ENCODE measurements at regions of chr15 and their contacts with region 1.

Region 1: GRCh38 chr15:44366971-44367370 is 60.5 kb upstream of the CTDSPL2 start:
- DNase-seq: no peak
- ATAC-seq: no peak
- H3K4me3 ChIP-seq: no peak overlapping the region
- H3K4me3 Mint-ChIP-seq: no peak overlapping the region
- H3K27ac ChIP-seq: no peak overlapping the region
- H3K27ac Mint-ChIP-seq: no peak overlapping the region
- H3K4me1 ChIP-seq: no peaks in the 10 kb centered on the region
- H3K4me1 Mint-ChIP-seq: no peaks in the 10 kb centered on the region
- H3K27me3 ChIP-seq: no peaks in the 10 kb centered on the region
- H3K27me3 Mint-ChIP-seq: no peaks in the 10 kb centered on the region

Region 2: GRCh38 chr15:44144184-44144583 is 222.8 kb before region 1 on chr15:
- CTCF ChIA-PET with region 1: no interaction called
- POLR2A ChIA-PET with region 1: interaction called in 1 of 2 experiments, 11 read pairs
- DNase-seq: no peak
- ATAC-seq: no peak
- H3K4me3 ChIP-seq: no peak overlapping the region
- H3K4me3 Mint-ChIP-seq: no peak overlapping the region
- H3K27ac ChIP-seq: no peak overlapping the region
- H3K27ac Mint-ChIP-seq: no peak overlapping the region
- H3K4me1 ChIP-seq: no peaks in the 10 kb centered on the region
- H3K4me1 Mint-ChIP-seq: no peaks in the 10 kb centered on the region
- H3K27me3 ChIP-seq: peaks cover 0 to 2% of the 10 kb centered on the region in 2 experiments
- H3K27me3 Mint-ChIP-seq: peaks cover 7 to 13% of the 10 kb centered on the region in 2 donors

Region 3: DNA sequence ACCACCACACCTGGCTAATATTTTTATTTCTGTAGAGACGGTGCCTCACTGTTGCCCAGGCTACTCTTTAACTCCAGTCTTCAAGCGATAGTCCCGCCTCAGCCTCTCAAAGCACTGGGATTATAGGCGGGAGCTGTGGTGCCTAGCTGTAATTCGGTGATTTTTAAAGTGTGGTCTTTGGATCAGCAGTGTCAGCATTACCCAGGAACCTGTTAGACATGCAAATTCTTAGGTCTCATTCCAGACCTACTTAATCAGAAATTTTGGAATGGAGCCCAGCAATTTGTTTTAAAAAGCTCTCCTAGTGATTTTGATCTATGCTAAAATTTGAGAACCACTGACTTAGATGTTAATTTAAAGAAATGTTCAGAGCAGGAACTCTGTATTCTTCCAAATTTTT is 26.6 kb before region 1 on chr15:
- CTCF ChIA-PET with region 1: no interaction called
- POLR2A ChIA-PET with region 1: no interaction called
- DNase-seq: no peak
- ATAC-seq: no peak
- H3K4me3 ChIP-seq: no peak overlapping the region
- H3K4me3 Mint-ChIP-seq: no peak overlapping the region
- H3K27ac ChIP-seq: no peak overlapping the region
- H3K27ac Mint-ChIP-seq: no peak overlapping the region
- H3K4me1 ChIP-seq: no peaks in the 10 kb centered on the region
- H3K4me1 Mint-ChIP-seq: no peaks in the 10 kb centered on the region
- H3K27me3 ChIP-seq: no peaks in the 10 kb centered on the region
- H3K27me3 Mint-ChIP-seq: no peaks in the 10 kb centered on the region

Measured in T-cell (primary cell).